Activated CD4-positive, alpha-beta memory T cell treated with anti-CD3 and anti-CD28 coated beads, Interleukin-2, amount 10 ng/mL, durations not matched to agents 7 days and 5 days (primary cell): ENCODE measurements at regions of chr1 and their contacts with region 1.

Region 1: GRCh38 chr1:26233903-26234643 is at the start of gene CEP85:
- DNase-seq: peak; percentile 99
- H3K4me3 Mint-ChIP-seq: peak within 1 kb of the TSS; percentile 96
- H3K27ac Mint-ChIP-seq: peak within 1 kb of the TSS; percentile 87
- H3K4me1 Mint-ChIP-seq: peaks cover 40% of the 10 kb centered on the region
- H3K27me3 Mint-ChIP-seq: no peaks in the 10 kb centered on the region
- total RNA-seq, gene CEP85: 35.5 to 37.7 TPM

Region 2: GRCh38 chr1:26051561-26051960 is 182.5 kb before region 1 on chr1:
- CTCF ChIA-PET with region 1: no interaction called
- POLR2A ChIA-PET with region 1: no interaction called
- DNase-seq: no peak
- H3K4me3 Mint-ChIP-seq: no peak overlapping the region
- H3K27ac Mint-ChIP-seq: no peak overlapping the region
- H3K4me1 Mint-ChIP-seq: peaks cover 5% of the 10 kb centered on the region
- H3K27me3 Mint-ChIP-seq: peaks cover 73% of the 10 kb centered on the region

Region 3: GRCh38 chr1:26083246-26083645 is 150.8 kb before region 1 on chr1:
- CTCF ChIA-PET with region 1: no interaction called
- POLR2A ChIA-PET with region 1: no interaction called
- DNase-seq: no peak
- H3K4me3 Mint-ChIP-seq: no peak overlapping the region
- H3K27ac Mint-ChIP-seq: no peak overlapping the region
- H3K4me1 Mint-ChIP-seq: no peaks in the 10 kb centered on the region
- H3K27me3 Mint-ChIP-seq: peaks cover 32% of the 10 kb centered on the region

Region 4: DNA sequence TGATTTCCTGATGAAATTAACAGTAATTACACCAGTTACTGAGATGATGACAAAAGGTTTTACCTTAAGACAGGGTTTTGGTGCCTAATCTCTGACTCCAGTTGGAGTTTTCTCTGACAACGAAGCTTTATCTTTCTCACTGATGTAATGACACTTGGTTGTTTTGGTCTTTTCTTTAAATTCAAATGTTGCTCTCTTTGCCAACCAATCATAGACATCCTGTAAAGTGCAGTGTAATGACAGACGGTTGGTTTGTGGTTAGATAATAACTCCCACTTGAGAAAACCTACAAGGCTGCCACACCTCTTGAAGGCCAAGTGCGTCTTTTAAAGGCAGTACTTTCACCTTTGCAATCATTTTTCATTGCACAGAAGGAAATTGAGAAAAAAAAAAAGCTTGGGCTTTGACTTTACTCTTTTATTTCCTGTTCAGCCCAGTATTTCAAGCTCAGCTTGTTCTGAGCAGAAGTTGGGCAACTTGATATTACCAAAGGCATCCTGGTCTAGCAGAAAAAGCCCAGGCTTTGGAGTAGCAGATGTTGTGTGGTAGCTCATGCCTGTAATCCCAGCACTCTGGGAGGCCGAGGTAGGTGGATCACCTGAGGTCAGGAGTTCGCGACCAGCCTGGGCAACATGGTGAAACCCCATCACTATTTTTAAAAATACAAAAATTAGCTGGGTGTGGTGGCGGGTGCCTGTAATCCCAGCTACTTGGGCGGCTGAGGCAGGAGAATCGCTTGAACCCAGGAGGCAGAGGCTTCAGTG is 107.6 kb before region 1 on chr1:
- CTCF ChIA-PET with region 1: interaction called, 20 read pairs
- POLR2A ChIA-PET with region 1: interaction called, 21 read pairs
- DNase-seq: peak; percentile 69
- H3K4me3 Mint-ChIP-seq: peak overlapping the region; percentile 73
- H3K27ac Mint-ChIP-seq: peak overlapping the region; percentile 81
- H3K4me1 Mint-ChIP-seq: peaks cover 74% of the 10 kb centered on the region
- H3K27me3 Mint-ChIP-seq: peaks cover 3% of the 10 kb centered on the region

Region 5: GRCh38 chr1:26169669-26170471 is 64.2 kb before region 1 on chr1 and contains the start of gene ZNF593:
- CTCF ChIA-PET with region 1: interaction called, 114 read pairs
- POLR2A ChIA-PET with region 1: interaction called, 46 read pairs
- DNase-seq: peak; percentile 90
- H3K4me3 Mint-ChIP-seq: peak within 1 kb of the TSS; percentile 83
- H3K27ac Mint-ChIP-seq: peak within 1 kb of the TSS; percentile 70
- H3K4me1 Mint-ChIP-seq: peaks cover 32% of the 10 kb centered on the region
- H3K27me3 Mint-ChIP-seq: no peaks in the 10 kb centered on the region
- total RNA-seq, gene ZNF593: 20.3 to 22.9 TPM

Region 6: DNA sequence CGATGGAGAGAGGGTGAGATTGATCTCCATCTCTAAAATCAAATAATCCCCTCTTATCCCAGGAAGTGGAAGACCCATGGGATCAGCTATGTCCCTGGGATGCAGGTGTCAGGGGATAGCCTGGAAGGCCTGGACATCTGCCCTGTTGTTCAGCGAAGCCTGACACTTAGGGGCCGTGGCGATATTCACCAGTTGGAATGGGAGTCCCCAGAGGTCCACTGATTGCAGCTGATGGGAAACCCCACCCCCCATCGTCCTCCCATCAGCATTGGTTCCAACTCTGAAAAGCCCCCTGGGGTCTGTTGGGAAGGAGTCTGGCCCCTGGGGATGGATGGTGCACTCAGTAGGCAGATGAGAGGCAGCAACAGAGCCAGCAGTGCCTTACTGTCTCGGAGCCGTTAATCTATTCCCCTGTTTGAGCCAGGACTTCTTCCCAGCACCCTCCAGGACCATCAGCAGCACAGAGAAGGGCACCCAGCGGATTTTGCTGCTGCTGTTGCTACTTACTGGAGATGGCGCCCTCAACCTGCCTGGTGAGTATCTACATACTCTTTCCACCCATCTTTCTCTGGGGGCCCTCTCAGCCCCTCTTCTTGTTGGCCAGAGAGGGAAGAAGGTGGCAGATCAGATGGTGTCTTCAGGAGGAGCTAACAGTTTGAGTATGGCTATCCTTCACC is 30.3 kb before region 1 on chr1:
- CTCF ChIA-PET with region 1: interaction called, 42 read pairs
- POLR2A ChIA-PET with region 1: interaction called, 44 read pairs
- DNase-seq: no peak
- H3K4me3 Mint-ChIP-seq: no peak overlapping the region
- H3K27ac Mint-ChIP-seq: no peak overlapping the region
- H3K4me1 Mint-ChIP-seq: peaks cover 41% of the 10 kb centered on the region
- H3K27me3 Mint-ChIP-seq: no peaks in the 10 kb centered on the region

Region 7: DNA sequence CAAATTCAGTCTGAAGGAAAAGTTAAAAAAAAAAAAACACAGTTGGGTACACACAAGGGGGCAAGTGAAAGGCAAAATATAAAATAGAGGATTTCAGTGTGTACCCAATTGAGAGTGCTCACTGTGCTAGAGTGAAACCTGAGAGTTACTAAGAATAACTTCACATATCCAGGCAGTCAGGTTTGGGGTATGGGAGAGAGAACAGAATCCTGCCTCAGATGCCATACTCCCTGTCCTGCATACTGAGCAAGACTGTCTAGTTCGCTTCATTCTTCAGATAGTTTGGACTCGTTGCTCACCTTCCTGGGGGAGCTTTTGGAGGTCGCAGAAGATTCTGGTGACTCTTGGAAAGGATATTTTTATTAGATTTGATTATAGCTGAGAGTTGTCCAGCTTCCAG is 20.3 kb after region 1 on chr1:
- CTCF ChIA-PET with region 1: interaction called, 31 read pairs
- POLR2A ChIA-PET with region 1: interaction called, 7 read pairs
- DNase-seq: no peak
- H3K4me3 Mint-ChIP-seq: no peak overlapping the region
- H3K27ac Mint-ChIP-seq: no peak overlapping the region
- H3K4me1 Mint-ChIP-seq: peaks cover 6% of the 10 kb centered on the region
- H3K27me3 Mint-ChIP-seq: no peaks in the 10 kb centered on the region

Region 8: DNA sequence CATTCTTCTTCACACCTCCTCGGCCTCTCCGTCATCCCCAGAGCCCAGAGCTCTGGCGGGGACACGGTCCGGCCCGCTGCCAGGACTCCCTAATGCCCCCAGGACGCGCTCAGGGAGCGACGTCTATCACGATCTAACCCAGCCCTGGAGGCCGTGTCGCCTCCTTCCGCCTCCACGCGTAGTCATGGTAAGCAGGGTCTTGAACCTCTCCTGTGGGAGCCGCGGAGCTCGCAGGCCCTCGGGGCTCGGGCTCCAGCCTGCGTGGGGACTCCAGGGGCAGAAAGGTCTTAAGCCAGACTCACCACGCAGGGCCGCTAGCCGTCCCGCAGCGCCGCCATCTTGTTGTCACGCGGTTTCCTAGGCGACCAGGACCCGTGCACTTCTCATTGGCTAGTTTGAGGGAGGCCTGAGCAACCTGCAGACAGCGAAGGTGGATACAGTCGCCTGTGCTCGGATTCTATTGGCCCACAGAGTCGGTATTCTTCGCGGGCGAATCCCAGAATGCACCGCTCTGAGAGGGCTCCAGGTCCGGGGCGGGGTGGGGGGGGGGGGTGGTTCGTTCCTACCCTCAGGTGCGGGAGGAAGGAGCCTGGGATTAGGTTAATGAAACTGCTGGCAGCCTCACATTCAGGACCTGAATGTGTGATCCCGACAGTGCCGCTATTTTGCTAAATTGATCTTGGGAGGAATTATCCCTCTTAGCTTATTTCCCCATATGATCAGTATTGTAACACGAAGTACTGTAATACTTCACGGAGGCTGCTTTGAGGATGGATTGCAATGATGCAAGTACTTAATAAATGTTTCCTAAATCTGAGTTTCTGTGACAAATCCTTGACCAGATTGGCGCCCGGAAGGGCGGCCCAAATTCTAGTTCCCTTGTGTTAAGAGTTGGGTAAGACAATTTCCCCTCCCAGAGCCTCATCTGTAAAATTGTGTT is 72.5 kb after region 1 on chr1 and contains the start of gene UBXN11:
- CTCF ChIA-PET with region 1: interaction called, 11 read pairs
- POLR2A ChIA-PET with region 1: interaction called, 13 read pairs
- DNase-seq: peak; percentile 96
- H3K4me3 Mint-ChIP-seq: peak within 1 kb of the TSS; percentile 90
- H3K27ac Mint-ChIP-seq: peak within 1 kb of the TSS; percentile 98
- H3K4me1 Mint-ChIP-seq: peaks cover 43% of the 10 kb centered on the region
- H3K27me3 Mint-ChIP-seq: no peaks in the 10 kb centered on the region
- total RNA-seq, gene UBXN11: 46.9 to 49.9 TPM

Region 9: DNA sequence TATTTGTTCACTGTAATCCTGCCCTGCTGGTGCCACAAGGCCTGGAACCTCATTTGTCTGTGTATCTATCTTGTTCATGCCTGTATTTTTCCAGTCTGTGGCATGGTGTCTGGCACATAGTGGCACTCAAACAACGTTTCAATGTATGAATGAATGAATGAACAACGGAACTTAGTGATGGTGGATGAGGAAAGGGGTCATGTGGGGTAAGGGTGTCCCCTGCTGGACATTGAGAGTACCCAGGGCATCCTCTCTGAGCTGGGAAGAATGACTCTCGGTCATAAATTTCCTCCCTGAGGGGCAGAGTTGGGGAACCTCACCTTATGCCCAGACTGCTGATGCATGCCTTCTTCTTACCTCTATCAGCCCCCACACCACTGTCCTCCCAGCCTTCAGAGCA is 157.4 kb after region 1 on chr1:
- CTCF ChIA-PET with region 1: interaction called, 13 read pairs
- POLR2A ChIA-PET with region 1: interaction called, 5 read pairs
- DNase-seq: peak; percentile 74
- H3K4me3 Mint-ChIP-seq: no peak overlapping the region
- H3K27ac Mint-ChIP-seq: no peak overlapping the region
- H3K4me1 Mint-ChIP-seq: peaks cover 43% of the 10 kb centered on the region
- H3K27me3 Mint-ChIP-seq: peaks cover 7% of the 10 kb centered on the region